Activated T-helper 2 cell treated with anti-CD3 and anti-CD28 coated beads, Interferon-gamma antibody, Interleukin-2, Interleukin-4, amounts not matched to agents 10 μg/mL and 5 μg/mL and 100 μg/mL, durations not matched to agents 14 hours and 24 hours and 36 hours (primary cell): ENCODE measurements at regions of chr7 and their contacts with region 1.

Region 1: GRCh38 chr7:81846398-81846797 is 76.6 kb upstream of the HGF start:
- DNase-seq: no peak
- H3K4me3 Mint-ChIP-seq: no peak overlapping the region
- H3K27ac Mint-ChIP-seq: no peak overlapping the region
- H3K4me1 Mint-ChIP-seq: peaks cover 5% of the 10 kb centered on the region
- H3K27me3 Mint-ChIP-seq: no peaks in the 10 kb centered on the region

Region 2: DNA sequence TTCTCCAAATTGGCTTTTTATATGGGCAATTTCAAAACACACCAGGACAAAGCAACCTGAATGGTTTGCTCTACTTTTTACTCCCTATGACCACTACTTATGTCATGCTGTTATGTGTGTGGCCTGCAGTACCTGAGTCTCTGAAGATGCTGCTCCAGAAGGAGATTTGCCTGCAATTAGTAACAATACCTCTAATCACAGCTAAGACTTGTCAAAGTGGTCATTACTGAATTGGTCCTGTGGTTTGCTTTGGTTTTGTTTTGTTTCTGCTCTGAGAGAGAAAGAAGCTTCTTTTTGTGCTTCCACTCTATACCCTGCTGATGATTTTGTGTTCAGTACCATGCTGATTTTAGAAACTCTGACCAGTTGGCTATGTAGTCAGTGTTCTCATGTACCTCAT is 102.0 kb before region 1 on chr7:
- intact Hi-C with region 1: no loop called
- DNase-seq: no peak
- H3K4me3 Mint-ChIP-seq: no peak overlapping the region
- H3K27ac Mint-ChIP-seq: no peak overlapping the region
- H3K4me1 Mint-ChIP-seq: no peaks in the 10 kb centered on the region
- H3K27me3 Mint-ChIP-seq: no peaks in the 10 kb centered on the region

Region 3: GRCh38 chr7:81871606-81872265 is 25.3 kb after region 1 on chr7:
- intact Hi-C with region 1: loop called (anchors 1 kb)
- DNase-seq: no peak
- H3K4me3 Mint-ChIP-seq: no peak overlapping the region
- H3K27ac Mint-ChIP-seq: no peak overlapping the region
- H3K4me1 Mint-ChIP-seq: no peaks in the 10 kb centered on the region
- H3K27me3 Mint-ChIP-seq: no peaks in the 10 kb centered on the region